Adrenal gland (tissue), 19 donors: ENCODE measurements at regions of chr19 and their contacts with region 1.

Region 1: GRCh38 chr19:16620018-16620417 is 8.0 kb downstream of the MED26 start:
- DNase-seq: no peak
- H3K4me3 ChIP-seq: no peak overlapping the region
- H3K27ac ChIP-seq: no peak overlapping the region
- H3K4me1 ChIP-seq: peaks cover 27 to 33% of the 10 kb centered on the region in 2 donors
- H3K27me3 ChIP-seq: no peaks in the 10 kb centered on the region
- CTCF ChIP-seq: no peak
- POLR2A ChIP-seq: no peak

Region 2: GRCh38 chr19:16579381-16579780 is 40.6 kb before region 1 on chr19:
- intact Hi-C with region 1: loop called (anchors 5 to 10 kb)
- DNase-seq: no peak
- H3K4me3 ChIP-seq: no peak overlapping the region
- H3K27ac ChIP-seq: peak overlapping the region in 1 of 5 donors; percentile 49
- H3K4me1 ChIP-seq: peaks cover 19 to 55% of the 10 kb centered on the region in 2 donors
- H3K27me3 ChIP-seq: no peaks in the 10 kb centered on the region
- CTCF ChIP-seq: no peak
- POLR2A ChIP-seq: no peak

Region 3: GRCh38 chr19:16714702-16715287 is 94.8 kb after region 1 on chr19:
- intact Hi-C with region 1: no loop called
- DNase-seq: peak in 6 of 7 donors; percentile 16 to 62 (median 38)
- H3K4me3 ChIP-seq: no peak overlapping the region
- H3K27ac ChIP-seq: no peak overlapping the region
- H3K4me1 ChIP-seq: no peaks in the 10 kb centered on the region
- H3K27me3 ChIP-seq: no peaks in the 10 kb centered on the region
- CTCF ChIP-seq: peak; percentile 24 to 66 (median 56)
- POLR2A ChIP-seq: no peak